ENCODE measurements at regions of chrX and their contacts with region 1.

Region 1: DNA sequence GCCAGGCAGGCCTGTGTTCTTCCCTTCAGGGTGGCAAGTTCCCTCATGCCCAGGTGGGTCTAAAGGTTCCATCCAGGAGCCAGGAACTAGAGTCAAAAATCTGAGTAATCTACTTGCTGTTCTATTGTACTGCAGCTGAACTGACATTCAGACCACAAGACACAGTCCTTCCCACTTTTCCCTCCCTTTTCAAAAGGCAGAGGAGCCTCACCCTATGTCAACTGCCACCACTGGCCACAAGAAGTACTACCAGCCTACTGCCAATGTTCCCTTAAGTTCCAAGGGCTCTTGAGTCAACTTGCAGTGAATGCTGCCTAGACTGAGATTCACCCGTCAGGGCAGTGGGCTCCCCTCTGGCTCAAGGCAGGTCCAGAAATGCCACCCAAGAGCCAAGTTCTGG is 133.5 kb downstream of the FAM47B start:
- DNase-seq: no peak

Region 2: GRCh38 chrX:34866646-34867045 is 209.4 kb before region 1 on chrX:
- intact Hi-C with region 1: loop called in 1 of 2 experiments (anchors 5 kb)
- DNase-seq: no peak

Region 3: DNA sequence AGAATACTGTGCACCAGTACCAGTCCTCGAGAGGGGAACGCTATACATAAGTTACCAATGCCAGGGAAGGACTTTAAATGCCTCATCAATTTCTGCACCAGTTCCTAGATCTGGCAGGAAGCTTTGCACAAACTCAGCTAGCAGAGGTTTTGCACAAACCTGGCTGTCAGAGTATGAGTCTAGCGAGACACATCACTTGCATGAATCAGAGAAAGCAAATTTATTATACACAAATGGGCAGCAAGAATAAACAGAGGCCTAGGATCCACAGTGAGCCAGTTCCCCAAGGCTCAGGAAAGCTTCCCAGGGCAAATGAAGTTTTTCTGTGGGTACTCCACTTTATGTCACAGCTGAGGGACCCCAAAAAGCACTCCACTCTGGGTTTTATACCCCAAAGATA is 1366.9 kb after region 1 on chrX:
- intact Hi-C with region 1: loop called in 1 of 2 experiments (anchors 5 kb)
- DNase-seq: no peak

Measured in posterior vena cava (tissue), 2 donors.